Activated T-helper 1 cell treated with anti-CD3 and anti-CD28 coated beads, Interleukin-12 subunit alpha, Interleukin-12 subunit beta, Interleukin-2, Interleukin-4 antibody, amounts not matched to agents 30 ng/mL and 10 ng/mL and 1 ng/mL, durations not matched to agents 14 hours and 24 hours and 36 hours (primary cell): ENCODE measurements at regions of chr12 and their contacts with region 1.

Region 1: GRCh38 chr12:57604454-57604991 is at the start of gene DTX3:
- DNase-seq: no peak
- H3K4me3 Mint-ChIP-seq: peak within 1 kb of the TSS; percentile 78
- H3K27ac Mint-ChIP-seq: peak within 1 kb of the TSS; percentile 86
- H3K4me1 Mint-ChIP-seq: peaks cover 19% of the 10 kb centered on the region
- H3K27me3 Mint-ChIP-seq: peaks cover 1% of the 10 kb centered on the region
- total RNA-seq, gene DTX3: 16.8 and 18.5 TPM in 2 replicates

Region 2: DNA sequence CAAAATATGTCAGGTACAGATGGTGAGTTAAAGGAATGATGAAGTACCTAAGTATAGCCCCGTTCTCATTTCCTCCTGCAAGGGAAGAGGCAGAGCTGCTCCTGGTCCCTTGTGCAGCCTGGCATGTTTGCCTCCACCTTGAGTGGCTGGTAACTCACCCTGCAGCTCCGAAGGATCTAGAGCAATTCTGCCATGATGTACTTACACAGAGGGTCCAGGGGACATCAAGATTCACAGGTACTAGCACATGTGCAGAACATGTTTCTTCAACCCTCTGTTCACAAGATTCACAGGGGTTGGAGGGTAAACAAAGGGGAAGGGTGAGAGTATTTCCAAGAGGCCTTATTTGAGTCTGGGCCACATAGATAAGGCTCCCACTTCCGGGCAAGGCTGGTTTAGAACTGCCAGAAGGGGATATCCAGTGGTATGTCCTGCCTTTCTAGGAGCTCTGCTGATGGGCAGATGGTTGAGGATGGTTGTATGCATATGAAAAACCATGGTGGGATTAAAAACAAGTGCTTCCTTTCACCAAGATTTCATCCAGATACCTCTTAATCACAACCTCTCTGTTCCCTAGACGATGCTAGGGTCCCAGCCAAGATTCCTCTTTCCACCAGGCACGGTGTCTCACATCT is 65.3 kb before region 1 on chr12:
- intact Hi-C with region 1: no loop called
- DNase-seq: no peak
- H3K4me3 Mint-ChIP-seq: no peak overlapping the region
- H3K27ac Mint-ChIP-seq: no peak overlapping the region
- H3K4me1 Mint-ChIP-seq: peaks cover 14% of the 10 kb centered on the region
- H3K27me3 Mint-ChIP-seq: no peaks in the 10 kb centered on the region

Region 3: DNA sequence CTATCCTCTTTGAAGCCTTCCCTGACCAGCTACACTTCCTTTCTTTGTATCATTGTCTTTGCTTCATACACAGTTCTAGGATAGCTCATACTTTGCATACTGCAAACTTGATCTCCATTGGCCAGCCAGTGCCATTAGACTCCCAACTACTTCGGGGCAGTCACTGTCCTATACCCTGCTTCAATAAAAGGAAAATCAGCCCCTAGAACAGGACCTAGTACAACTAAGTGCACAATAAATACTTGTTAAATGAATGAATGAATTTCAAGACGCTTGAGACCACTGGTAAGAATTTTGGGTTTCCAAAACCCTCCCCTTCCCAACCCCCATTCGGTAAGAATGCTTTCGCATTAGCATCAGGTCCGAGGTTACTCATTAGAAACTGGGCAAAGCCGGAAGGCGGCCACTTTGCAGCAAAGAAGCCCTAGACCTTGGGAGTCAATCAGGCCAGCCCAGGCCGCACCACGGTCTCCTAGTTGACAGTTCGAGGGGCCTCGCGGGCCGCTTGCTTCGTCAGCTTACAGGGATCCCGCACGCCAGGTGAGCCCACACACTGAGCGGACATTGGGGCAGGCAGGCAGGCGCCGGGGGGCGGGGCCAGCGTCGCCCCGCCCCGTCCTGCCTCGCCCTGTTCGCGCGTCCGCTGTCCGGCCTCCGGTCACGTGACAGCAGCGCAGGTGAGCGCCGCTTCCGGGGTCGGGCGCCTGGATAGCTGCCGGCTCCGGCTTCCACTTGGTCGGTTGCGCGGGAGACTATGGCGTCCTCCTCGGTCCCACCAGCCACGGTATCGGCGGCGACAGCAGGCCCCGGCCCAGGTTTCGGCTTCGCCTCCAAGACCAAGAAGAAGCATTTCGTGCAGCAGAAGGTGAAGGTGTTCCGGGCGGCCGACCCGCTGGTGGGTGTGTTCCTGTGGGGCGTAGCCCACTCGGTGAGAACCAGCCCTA is 13.7 kb before region 1 on chr12 and contains the start of gene PIP4K2C:
- intact Hi-C with region 1: loop called (anchors 2 kb)
- DNase-seq: peak; percentile 77
- H3K4me3 Mint-ChIP-seq: peak within 1 kb of the TSS; percentile 90
- H3K27ac Mint-ChIP-seq: peak within 1 kb of the TSS; percentile 75
- H3K4me1 Mint-ChIP-seq: peaks cover 31% of the 10 kb centered on the region
- H3K27me3 Mint-ChIP-seq: no peaks in the 10 kb centered on the region
- total RNA-seq, gene PIP4K2C: 22.8 and 25.7 TPM in 2 replicates